ENCODE measurements at regions of chr14 and their contacts with region 1.

Region 1: GRCh38 chr14:61475316-61475715 is 153.9 kb downstream of the PRKCH start:
- DNase-seq: no peak
- H3K4me3 ChIP-seq: no peak overlapping the region
- H3K27ac ChIP-seq: peak overlapping the region; percentile 82 to 86
- H3K4me1 ChIP-seq: peaks cover 25 to 45% of the 10 kb centered on the region in 2 donors
- H3K27me3 ChIP-seq: no peaks in the 10 kb centered on the region
- CTCF ChIP-seq: peak; percentile 30 to 67 (median 58)

Region 2: GRCh38 chr14:61503167-61503801 is 28.0 kb after region 1 on chr14:
- intact Hi-C with region 1: loop called (anchors 2 kb)
- DNase-seq: no peak
- H3K4me3 ChIP-seq: peak overlapping the region in 1 of 2 donors; percentile 25
- H3K27ac ChIP-seq: peak overlapping the region; percentile 44 to 50
- H3K4me1 ChIP-seq: peaks cover 7 to 17% of the 10 kb centered on the region in 2 donors
- H3K27me3 ChIP-seq: no peaks in the 10 kb centered on the region
- CTCF ChIP-seq: no peak

Region 3: DNA sequence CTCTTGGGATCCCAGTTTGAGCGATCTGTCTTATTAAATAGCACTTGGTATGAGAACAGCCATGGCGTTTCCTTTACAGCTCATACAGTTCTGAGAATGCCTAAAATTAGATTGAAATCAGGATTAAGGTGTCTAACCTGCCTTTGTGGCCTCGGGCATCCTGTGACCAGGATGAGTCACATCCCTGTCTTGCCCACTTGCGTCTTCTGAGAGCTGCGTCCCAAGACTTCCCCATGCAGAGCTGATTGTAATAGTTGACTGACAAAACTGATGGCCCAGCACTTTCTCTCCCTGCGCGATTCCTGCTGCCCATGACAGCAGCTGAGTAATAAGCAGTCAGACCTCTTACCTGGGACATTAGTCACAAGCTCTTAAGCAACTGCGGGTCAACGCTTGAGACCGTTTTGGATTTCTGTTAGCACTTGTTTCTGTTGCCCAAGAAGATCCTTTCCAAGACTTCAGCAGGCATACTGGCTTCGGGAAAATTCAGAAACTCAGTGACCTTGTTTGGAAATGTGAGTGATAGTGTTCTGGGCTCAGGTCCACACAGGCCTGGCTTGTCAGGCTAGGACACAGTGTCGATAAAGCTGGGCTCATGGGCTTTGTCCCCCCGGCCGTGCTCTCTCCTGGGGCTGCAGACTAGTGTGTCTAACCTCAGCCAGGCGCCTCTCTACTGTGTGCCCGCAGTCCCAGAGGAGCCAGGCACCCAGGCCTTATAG is 50.1 kb after region 1 on chr14:
- intact Hi-C with region 1: loop called (anchors 2 kb)
- DNase-seq: peak; percentile 88 to 92
- H3K4me3 ChIP-seq: peak overlapping the region in 1 of 2 donors; percentile 5
- H3K27ac ChIP-seq: peak overlapping the region; percentile 86 to 88
- H3K4me1 ChIP-seq: peaks cover 17 to 40% of the 10 kb centered on the region in 2 donors
- H3K27me3 ChIP-seq: no peaks in the 10 kb centered on the region
- CTCF ChIP-seq: no peak

Region 4: DNA sequence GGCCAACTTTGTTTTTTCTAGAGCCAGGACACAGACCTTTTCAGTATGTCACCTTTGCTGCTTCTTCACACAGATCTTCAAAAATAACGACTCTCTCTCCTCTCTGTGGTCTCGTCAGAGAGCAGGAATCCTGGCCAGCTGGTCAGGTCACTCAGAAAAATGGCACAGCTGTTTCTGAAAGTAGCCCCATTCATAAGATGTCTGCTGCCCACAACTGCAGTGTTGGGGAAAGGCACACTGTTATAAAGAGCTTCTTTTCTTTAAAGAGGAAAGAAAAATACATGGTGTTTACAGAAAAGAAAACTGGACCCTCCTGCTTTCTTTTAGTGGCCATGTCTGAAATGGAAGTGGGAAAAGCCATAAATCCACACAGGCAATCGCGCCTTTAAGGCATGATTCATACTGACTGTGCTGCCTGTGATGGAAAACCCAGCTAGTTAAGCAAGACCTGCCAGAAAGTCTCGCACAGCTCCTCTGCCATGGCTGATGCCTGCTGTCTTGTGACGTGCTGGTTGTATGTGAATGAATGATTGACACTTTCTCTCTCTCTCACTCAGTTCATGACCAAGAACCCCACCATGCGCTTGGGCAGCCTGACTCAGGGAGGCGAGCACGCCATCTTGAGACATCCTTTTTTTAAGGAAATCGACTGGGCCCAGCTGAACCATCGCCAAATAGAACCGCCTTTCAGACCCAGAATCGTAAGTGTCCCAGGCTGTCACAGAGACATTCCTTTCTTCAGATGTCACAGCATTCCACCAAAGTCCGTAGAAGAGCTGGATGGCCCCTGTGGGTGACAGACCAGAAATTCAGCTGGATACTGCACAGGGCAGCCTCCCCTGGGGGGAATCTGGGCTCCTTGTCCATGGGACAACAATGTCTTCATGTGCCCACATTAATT is 72.1 kb after region 1 on chr14:
- intact Hi-C with region 1: loop called (anchors 5 kb)
- DNase-seq: peak in 1 of 2 donors; percentile 79
- H3K4me3 ChIP-seq: no peak overlapping the region
- H3K27ac ChIP-seq: peak overlapping the region; percentile 52 to 70
- H3K4me1 ChIP-seq: peaks cover 18 to 25% of the 10 kb centered on the region in 2 donors
- H3K27me3 ChIP-seq: no peaks in the 10 kb centered on the region
- CTCF ChIP-seq: no peak

Region 5: GRCh38 chr14:61561657-61562276 is 86.5 kb after region 1 on chr14:
- intact Hi-C with region 1: loop called (anchors 5 kb)
- DNase-seq: peak; percentile 59 to 91
- H3K4me3 ChIP-seq: no peak overlapping the region
- H3K27ac ChIP-seq: peak overlapping the region; percentile 66 to 71
- H3K4me1 ChIP-seq: peaks cover 0 to 12% of the 10 kb centered on the region in 2 donors
- H3K27me3 ChIP-seq: no peaks in the 10 kb centered on the region
- CTCF ChIP-seq: no peak

Region 6: DNA sequence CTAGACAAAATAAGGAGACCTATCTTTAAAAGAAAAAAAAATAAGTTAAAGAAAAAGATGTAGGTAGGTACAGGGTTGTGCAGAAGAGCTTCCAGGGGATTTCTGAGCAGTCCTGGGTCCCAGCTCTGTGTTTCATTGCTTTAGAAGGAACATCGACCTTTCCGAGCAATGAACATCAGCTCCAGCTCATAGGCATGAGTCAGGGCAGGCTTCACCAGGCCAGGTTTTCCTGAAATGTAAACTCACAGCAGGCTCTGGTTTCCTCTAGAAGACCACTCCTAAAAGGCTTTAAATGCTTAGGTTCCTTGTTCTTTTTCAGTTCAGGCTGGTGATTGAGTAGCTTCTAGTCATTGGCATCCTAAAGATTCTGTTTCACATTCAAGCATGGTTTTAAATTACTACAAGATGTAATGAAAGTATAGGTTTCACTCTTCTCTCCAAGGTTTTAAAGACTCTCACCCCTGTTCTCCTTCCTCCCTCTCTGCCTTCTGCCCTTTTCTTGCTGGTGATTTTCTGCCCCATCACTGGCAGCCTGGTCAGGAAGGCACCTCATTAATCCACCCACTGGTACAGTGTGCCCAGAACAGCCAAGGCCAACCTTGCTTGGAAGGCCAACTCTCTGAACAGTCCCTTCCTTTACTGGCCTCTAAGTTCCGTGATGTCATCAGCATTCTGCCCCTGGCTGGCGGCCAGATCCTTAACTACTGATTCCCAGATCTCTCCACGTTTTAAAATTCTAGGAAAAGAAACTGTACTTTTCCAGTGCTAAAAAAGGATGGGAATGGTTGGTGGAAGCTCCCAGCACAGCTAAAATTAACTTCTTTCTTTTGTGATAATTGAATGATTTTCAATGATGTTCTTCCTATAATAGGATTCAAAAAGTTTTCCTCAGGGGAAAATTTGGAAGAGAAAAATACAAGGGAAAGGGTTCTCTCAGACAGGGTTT is 110.6 kb after region 1 on chr14:
- intact Hi-C with region 1: loop called (anchors 5 kb)
- DNase-seq: peak; percentile 39 to 91
- H3K4me3 ChIP-seq: no peak overlapping the region
- H3K27ac ChIP-seq: peak overlapping the region; percentile 85 to 86
- H3K4me1 ChIP-seq: peaks cover 22 to 26% of the 10 kb centered on the region in 2 donors
- H3K27me3 ChIP-seq: no peaks in the 10 kb centered on the region
- CTCF ChIP-seq: no peak

Region 7: GRCh38 chr14:61694830-61695694 is 219.7 kb after region 1 on chr14 and contains the start of gene HIF1A:
- intact Hi-C with region 1: loop called (anchors 1 kb)
- DNase-seq: peak; percentile 91 to 98
- H3K4me3 ChIP-seq: peak within 1 kb of the TSS; percentile 95
- H3K27ac ChIP-seq: peak within 1 kb of the TSS; percentile 96 to 98
- H3K4me1 ChIP-seq: peaks cover 3 to 6% of the 10 kb centered on the region in 2 donors
- H3K27me3 ChIP-seq: no peaks in the 10 kb centered on the region
- CTCF ChIP-seq: no peak
- total RNA-seq, gene HIF1A: 87.0 TPM

Region 8: DNA sequence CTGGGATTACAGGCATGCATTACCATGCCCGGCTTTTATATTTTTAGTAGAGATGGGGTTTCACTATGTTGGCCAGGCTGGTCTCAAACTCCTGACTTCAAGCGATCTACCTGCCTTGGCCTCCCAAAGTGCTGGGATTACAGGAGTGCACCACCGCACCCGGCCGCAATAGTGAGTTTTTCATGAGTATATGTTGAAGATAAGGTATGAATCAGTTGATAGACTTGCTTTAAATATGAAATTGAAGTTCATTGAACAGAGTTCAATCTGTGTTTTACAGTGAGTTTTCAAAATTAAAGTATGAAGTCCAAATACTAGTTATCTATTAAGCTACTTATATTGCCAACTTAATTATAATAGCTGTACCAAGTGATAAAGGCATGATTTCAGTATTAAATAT is 322.0 kb after region 1 on chr14:
- intact Hi-C with region 1: no loop called
- DNase-seq: no peak
- H3K4me3 ChIP-seq: no peak overlapping the region
- H3K27ac ChIP-seq: no peak overlapping the region
- H3K4me1 ChIP-seq: no peaks in the 10 kb centered on the region
- H3K27me3 ChIP-seq: no peaks in the 10 kb centered on the region
- CTCF ChIP-seq: no peak

Measured in ascending aorta (tissue), 2 donors.